Ascending aorta (tissue), 2 donors: ENCODE measurements at regions of chr13 and their contacts with region 1.

Region 1: DNA sequence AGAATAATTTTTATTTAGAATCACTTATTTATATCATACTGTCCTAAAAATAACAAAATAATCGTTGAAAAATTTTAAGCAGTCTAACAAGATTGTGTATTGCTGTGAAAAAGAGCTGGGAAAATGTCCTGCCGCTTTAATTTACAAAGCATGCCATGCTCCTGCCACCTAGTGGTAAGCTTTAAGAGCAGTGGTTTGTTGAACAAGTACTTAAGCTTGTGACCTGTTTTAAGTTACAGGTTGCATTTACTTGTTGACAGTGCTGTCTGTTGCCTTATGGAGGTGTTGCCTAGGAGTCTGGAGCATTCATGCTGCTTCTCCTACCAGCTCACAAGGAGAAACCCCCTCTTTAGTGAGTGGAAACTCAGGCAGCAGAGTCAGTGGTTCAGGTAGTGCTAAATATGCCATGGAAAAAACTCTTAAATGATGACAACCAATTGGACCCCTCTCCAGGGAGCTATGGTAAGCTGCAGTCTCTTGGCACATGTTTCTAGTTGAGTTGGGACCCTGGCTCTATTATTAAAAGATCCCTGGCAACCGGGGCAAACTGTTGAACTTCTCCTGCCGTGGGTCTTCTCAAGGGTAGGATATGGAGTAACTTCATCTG is 68.4 kb downstream of the SPATA13 start:
- DNase-seq: no peak
- H3K4me3 ChIP-seq: no peak overlapping the region
- H3K27ac ChIP-seq: no peak overlapping the region
- H3K4me1 ChIP-seq: no peaks in the 10 kb centered on the region
- H3K27me3 ChIP-seq: no peaks in the 10 kb centered on the region
- CTCF ChIP-seq: peak in 2 of 3 experiments; percentile 77 to 80

Region 2: GRCh38 chr13:23902975-23903905 is 325.7 kb before region 1 on chr13:
- intact Hi-C with region 1: no loop called
- DNase-seq: no peak
- H3K4me3 ChIP-seq: peak overlapping the region; percentile 27 to 44
- H3K27ac ChIP-seq: no peak overlapping the region
- H3K4me1 ChIP-seq: peaks cover 0 to 6% of the 10 kb centered on the region in 2 donors
- H3K27me3 ChIP-seq: no peaks in the 10 kb centered on the region
- CTCF ChIP-seq: no peak

Region 3: GRCh38 chr13:23921451-23921888 is 307.5 kb before region 1 on chr13:
- intact Hi-C with region 1: loop called (anchors 5 kb)
- DNase-seq: no peak
- H3K4me3 ChIP-seq: no peak overlapping the region
- H3K27ac ChIP-seq: no peak overlapping the region
- H3K4me1 ChIP-seq: no peaks in the 10 kb centered on the region
- H3K27me3 ChIP-seq: no peaks in the 10 kb centered on the region
- CTCF ChIP-seq: peak in 2 of 3 experiments; percentile 43